ENCODE measurements at regions of chr14 and their contacts with region 1.

Region 1: GRCh38 chr14:96584199-96584906 is 82.2 kb downstream of the PAPOLA start:
- DNase-seq: peak; percentile 33
- ATAC-seq: peak; percentile 91
- H3K4me3 ChIP-seq: no peak overlapping the region
- H3K27ac ChIP-seq: no peak overlapping the region
- H3K4me1 ChIP-seq: peaks cover 0 to 4% of the 10 kb centered on the region in 2 experiments; a peak in 1 of 4 replicates
- H3K27me3 ChIP-seq: no peaks in the 10 kb centered on the region
- CTCF ChIP-seq: peak; percentile 62 to 98 (median 82)
- POLR2A ChIP-seq: no peak
- RAD21 ChIP-seq: peak; percentile 98

Region 2: GRCh38 chr14:96666088-96666487 is 81.7 kb after region 1 on chr14:
- CTCF ChIA-PET with region 1: no interaction called
- POLR2A ChIA-PET with region 1: no interaction called
- RAD21 ChIA-PET with region 1: no interaction called
- intact Hi-C with region 1: loop called (anchors 5 kb)
- DNase-seq: no peak
- ATAC-seq: peak; percentile 52; the same call in 1 of the 2 replicates
- H3K4me3 ChIP-seq: no peak overlapping the region
- H3K27ac ChIP-seq: no peak overlapping the region
- H3K4me1 ChIP-seq: no peaks in the 10 kb centered on the region
- H3K27me3 ChIP-seq: peaks cover 41% of the 10 kb centered on the region
- CTCF ChIP-seq: peak in 2 of 3 experiments; percentile 25 to 31; a peak in 2 of 6 replicates
- POLR2A ChIP-seq: no peak
- RAD21 ChIP-seq: peak; percentile 40

Region 3: GRCh38 chr14:96741151-96741977 is 157.0 kb after region 1 on chr14:
- CTCF ChIA-PET with region 1: interaction called, 12 read pairs
- POLR2A ChIA-PET with region 1: no interaction called
- RAD21 ChIA-PET with region 1: no interaction called
- intact Hi-C with region 1: loop called (anchors 1 kb)
- DNase-seq: no peak
- ATAC-seq: peak; percentile 92
- H3K4me3 ChIP-seq: peak overlapping the region; percentile 40 to 60
- H3K27ac ChIP-seq: no peak overlapping the region
- H3K4me1 ChIP-seq: no peaks in the 10 kb centered on the region; a peak in 2 of 4 replicates
- H3K27me3 ChIP-seq: peaks cover 18% of the 10 kb centered on the region
- CTCF ChIP-seq: peak; percentile 76 to 82 (median 78)
- POLR2A ChIP-seq: no peak
- RAD21 ChIP-seq: peak; percentile 85

Region 4: GRCh38 chr14:96783915-96784224 is 199.5 kb after region 1 on chr14:
- CTCF ChIA-PET with region 1: no interaction called
- POLR2A ChIA-PET with region 1: no interaction called
- RAD21 ChIA-PET with region 1: no interaction called
- intact Hi-C with region 1: no loop called
- DNase-seq: no peak
- ATAC-seq: no peak
- H3K4me3 ChIP-seq: no peak overlapping the region
- H3K27ac ChIP-seq: no peak overlapping the region
- H3K4me1 ChIP-seq: peaks cover 0 to 12% of the 10 kb centered on the region in 2 experiments; a peak in 2 of 4 replicates
- H3K27me3 ChIP-seq: no peaks in the 10 kb centered on the region
- CTCF ChIP-seq: no peak
- POLR2A ChIP-seq: no peak
- RAD21 ChIP-seq: no peak

Region 5: DNA sequence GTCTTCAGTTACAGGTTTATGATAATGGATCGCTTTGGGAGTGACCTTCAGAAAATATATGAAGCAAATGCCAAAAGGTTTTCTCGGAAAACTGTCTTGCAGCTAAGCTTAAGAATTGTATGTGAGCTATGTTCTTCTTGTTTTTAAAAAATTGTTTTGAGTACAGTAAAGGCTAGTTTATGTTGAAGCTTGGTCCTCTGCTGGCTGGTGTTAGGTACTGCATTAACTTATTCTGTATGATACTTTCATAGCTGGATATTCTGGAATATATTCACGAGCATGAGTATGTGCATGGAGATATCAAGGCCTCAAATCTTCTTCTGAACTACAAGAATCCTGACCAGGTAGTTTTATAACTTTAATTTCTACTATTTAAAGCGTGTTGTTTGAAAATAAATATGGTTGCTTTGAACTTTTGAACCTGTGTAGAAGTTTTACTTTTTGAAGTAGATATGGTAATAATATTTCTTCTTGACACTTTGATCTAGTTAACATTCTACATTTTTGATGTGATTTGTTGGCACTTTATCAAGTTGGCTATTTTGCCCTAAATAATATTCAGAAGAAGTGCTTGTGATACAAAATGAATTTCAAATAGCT is 268.6 kb after region 1 on chr14:
- CTCF ChIA-PET with region 1: interaction called, 9 read pairs
- POLR2A ChIA-PET with region 1: no interaction called
- RAD21 ChIA-PET with region 1: no interaction called
- intact Hi-C with region 1: loop called (anchors 1 kb)
- DNase-seq: peak; percentile 26
- ATAC-seq: peak; percentile 84
- H3K4me3 ChIP-seq: no peak overlapping the region
- H3K27ac ChIP-seq: no peak overlapping the region
- H3K4me1 ChIP-seq: peaks cover 0 to 9% of the 10 kb centered on the region in 2 experiments; a peak in 2 of 4 replicates
- H3K27me3 ChIP-seq: no peaks in the 10 kb centered on the region
- CTCF ChIP-seq: peak; percentile 32 to 76 (median 56); a peak in 4 of 6 replicates
- POLR2A ChIP-seq: no peak
- RAD21 ChIP-seq: peak; percentile 47

Region 6: GRCh38 chr14:97138801-97139200 is 554.4 kb after region 1 on chr14:
- CTCF ChIA-PET with region 1: interaction called, 3 read pairs
- POLR2A ChIA-PET with region 1: no interaction called
- RAD21 ChIA-PET with region 1: no interaction called
- intact Hi-C with region 1: loop called (anchors 1 kb)
- DNase-seq: peak; percentile 29
- ATAC-seq: peak; percentile 78
- H3K4me3 ChIP-seq: no peak overlapping the region
- H3K27ac ChIP-seq: no peak overlapping the region
- H3K4me1 ChIP-seq: no peaks in the 10 kb centered on the region
- H3K27me3 ChIP-seq: no peaks in the 10 kb centered on the region
- CTCF ChIP-seq: peak; percentile 40 to 55 (median 46); a peak in 4 of 6 replicates
- POLR2A ChIP-seq: no peak
- RAD21 ChIP-seq: peak; percentile 82

Region 7: GRCh38 chr14:97177015-97177414 is 592.7 kb after region 1 on chr14:
- CTCF ChIA-PET with region 1: no interaction called
- POLR2A ChIA-PET with region 1: no interaction called
- RAD21 ChIA-PET with region 1: no interaction called
- intact Hi-C with region 1: loop called (anchors 1 kb)
- DNase-seq: peak; percentile 69
- ATAC-seq: peak; percentile 69
- H3K4me3 ChIP-seq: no peak overlapping the region
- H3K27ac ChIP-seq: no peak overlapping the region
- H3K4me1 ChIP-seq: peaks cover 17 to 51% of the 10 kb centered on the region in 2 experiments
- H3K27me3 ChIP-seq: no peaks in the 10 kb centered on the region
- CTCF ChIP-seq: peak; percentile 53 to 66 (median 60)
- POLR2A ChIP-seq: no peak
- RAD21 ChIP-seq: peak; percentile 77

Region 8: DNA sequence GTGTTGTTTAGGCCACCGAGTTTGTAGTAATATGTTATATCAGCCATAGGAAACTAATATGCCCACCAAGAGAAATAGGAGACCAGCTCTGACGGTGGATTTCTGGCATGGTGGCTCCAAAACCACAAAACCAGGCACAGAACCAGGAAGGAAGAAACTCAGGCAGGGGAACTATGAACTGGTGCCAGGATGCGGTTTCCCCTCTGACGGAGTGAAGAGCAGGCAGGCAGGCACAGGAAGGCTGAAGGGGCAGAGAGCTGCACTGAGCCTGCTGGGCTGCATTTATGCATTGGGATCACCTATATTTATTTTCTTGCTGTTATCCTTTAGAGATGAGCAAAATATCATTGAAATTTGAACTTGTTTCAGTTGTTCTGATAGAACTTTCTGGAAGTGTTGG is 692.2 kb after region 1 on chr14:
- CTCF ChIA-PET with region 1: no interaction called
- POLR2A ChIA-PET with region 1: no interaction called
- RAD21 ChIA-PET with region 1: no interaction called
- intact Hi-C with region 1: loop called (anchors 10 kb)
- DNase-seq: no peak
- ATAC-seq: no peak
- H3K4me3 ChIP-seq: no peak overlapping the region
- H3K27ac ChIP-seq: no peak overlapping the region
- H3K4me1 ChIP-seq: peaks cover 0 to 3% of the 10 kb centered on the region in 2 experiments; a peak in 1 of 4 replicates
- H3K27me3 ChIP-seq: no peaks in the 10 kb centered on the region
- CTCF ChIP-seq: no peak
- POLR2A ChIP-seq: no peak
- RAD21 ChIP-seq: no peak